Transverse colon (tissue), 4 donors: ENCODE measurements at regions of chr11 and their contacts with region 1.

Region 1: GRCh38 chr11:80155412-80156017 is 714.7 kb upstream of the TENM4 start:
- DNase-seq: no peak
- H3K4me3 ChIP-seq: no peak overlapping the region
- H3K27ac ChIP-seq: no peak overlapping the region
- H3K4me1 ChIP-seq: no peaks in the 10 kb centered on the region
- H3K27me3 ChIP-seq: no peaks in the 10 kb centered on the region
- CTCF ChIP-seq: peak; percentile 21 to 46 (median 45)
- EP300 ChIP-seq: no peak
- POLR2A ChIP-seq: no peak

Region 2: GRCh38 chr11:79708300-79708932 is 447.1 kb before region 1 on chr11:
- in situ Hi-C with region 1: loop called in 1 of 4 experiments (anchors 10 kb)
- intact Hi-C with region 1: no loop called
- DNase-seq: peak; percentile 13
- H3K4me3 ChIP-seq: no peak overlapping the region
- H3K27ac ChIP-seq: no peak overlapping the region
- H3K4me1 ChIP-seq: no peaks in the 10 kb centered on the region
- H3K27me3 ChIP-seq: no peaks in the 10 kb centered on the region
- CTCF ChIP-seq: peak; percentile 32 to 54 (median 36)
- EP300 ChIP-seq: no peak
- POLR2A ChIP-seq: no peak

Region 3: GRCh38 chr11:79762279-79762921 is 393.1 kb before region 1 on chr11:
- in situ Hi-C with region 1: loop called in 1 of 4 experiments (anchors 25 kb)
- intact Hi-C with region 1: no loop called
- DNase-seq: no peak
- H3K4me3 ChIP-seq: no peak overlapping the region
- H3K27ac ChIP-seq: no peak overlapping the region
- H3K4me1 ChIP-seq: no peaks in the 10 kb centered on the region
- H3K27me3 ChIP-seq: no peaks in the 10 kb centered on the region
- CTCF ChIP-seq: peak in 3 of 5 experiments; percentile 7 to 31 (median 19)
- EP300 ChIP-seq: no peak
- POLR2A ChIP-seq: no peak

Region 4: GRCh38 chr11:80083531-80083951 is 72.0 kb before region 1 on chr11:
- in situ Hi-C with region 1: no loop called
- intact Hi-C with region 1: no loop called
- DNase-seq: peak; percentile 7
- H3K4me3 ChIP-seq: no peak overlapping the region
- H3K27ac ChIP-seq: no peak overlapping the region
- H3K4me1 ChIP-seq: no peaks in the 10 kb centered on the region
- H3K27me3 ChIP-seq: no peaks in the 10 kb centered on the region
- CTCF ChIP-seq: no peak
- EP300 ChIP-seq: no peak
- POLR2A ChIP-seq: no peak

Region 5: GRCh38 chr11:80248138-80248537 is 92.6 kb after region 1 on chr11:
- in situ Hi-C with region 1: no loop called
- intact Hi-C with region 1: no loop called
- DNase-seq: no peak
- H3K4me3 ChIP-seq: no peak overlapping the region
- H3K27ac ChIP-seq: no peak overlapping the region
- H3K4me1 ChIP-seq: no peaks in the 10 kb centered on the region
- H3K27me3 ChIP-seq: no peaks in the 10 kb centered on the region
- CTCF ChIP-seq: no peak
- EP300 ChIP-seq: no peak
- POLR2A ChIP-seq: no peak

Region 6: GRCh38 chr11:81888391-81888790 is 1732.9 kb after region 1 on chr11:
- in situ Hi-C with region 1: no loop called
- intact Hi-C with region 1: no loop called
- DNase-seq: no peak
- H3K4me3 ChIP-seq: no peak overlapping the region
- H3K27ac ChIP-seq: no peak overlapping the region
- H3K4me1 ChIP-seq: no peaks in the 10 kb centered on the region
- H3K27me3 ChIP-seq: no peaks in the 10 kb centered on the region
- CTCF ChIP-seq: no peak
- EP300 ChIP-seq: no peak
- POLR2A ChIP-seq: no peak